Ovary (tissue), 10 donors: ENCODE measurements at regions of chr6 and their contacts with region 1.

Region 1: GRCh38 chr6:37819177-37819823 is at the start of gene ZFAND3:
- DNase-seq: peak; percentile 97 to 98 (median 98)
- H3K4me3 ChIP-seq: peak within 1 kb of the TSS; percentile 88
- H3K27ac ChIP-seq: peak within 1 kb of the TSS; percentile 98 to 99
- H3K4me1 ChIP-seq: peaks cover 12% of the 10 kb centered on the region
- H3K27me3 ChIP-seq: no peaks in the 10 kb centered on the region
- CTCF ChIP-seq: peak in 1 of 3 donors; percentile 37
- EP300 ChIP-seq: no peak
- POLR2A ChIP-seq: no peak
- total RNA-seq, gene ZFAND3: 16.6 to 81.1 (median 51.9) TPM

Region 2: DNA sequence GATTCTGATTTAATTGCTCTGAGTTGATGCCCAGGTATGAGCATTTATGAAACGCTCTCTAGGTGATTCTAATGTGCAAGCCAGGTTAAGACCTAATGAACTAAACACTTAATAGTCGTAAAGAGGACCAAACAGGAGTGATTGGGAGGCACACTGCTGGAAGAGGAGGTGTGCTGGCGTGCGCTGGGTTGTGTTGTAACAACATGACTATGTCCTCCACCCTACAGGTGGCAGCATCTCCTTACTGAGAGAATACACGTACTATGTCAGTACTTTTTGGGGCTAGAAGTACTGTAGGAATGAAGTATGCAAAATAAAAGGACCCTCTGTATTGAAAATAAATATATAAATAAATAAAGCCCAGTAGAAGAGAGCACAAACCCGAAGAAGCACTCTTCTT is 921.7 kb before region 1 on chr6:
- intact Hi-C with region 1: no loop called
- DNase-seq: no peak
- H3K4me3 ChIP-seq: no peak overlapping the region
- H3K27ac ChIP-seq: no peak overlapping the region
- H3K4me1 ChIP-seq: peaks cover 1% of the 10 kb centered on the region
- H3K27me3 ChIP-seq: no peaks in the 10 kb centered on the region
- CTCF ChIP-seq: peak in 1 of 3 donors; percentile 24
- EP300 ChIP-seq: no peak
- POLR2A ChIP-seq: no peak

Region 3: GRCh38 chr6:37860226-37860839 is 41.0 kb after region 1 on chr6:
- intact Hi-C with region 1: loop called in 1 of 4 experiments (anchors 10 kb)
- DNase-seq: peak in 1 of 5 donors; percentile 31
- H3K4me3 ChIP-seq: no peak overlapping the region
- H3K27ac ChIP-seq: no peak overlapping the region
- H3K4me1 ChIP-seq: peaks cover 3% of the 10 kb centered on the region
- H3K27me3 ChIP-seq: no peaks in the 10 kb centered on the region
- CTCF ChIP-seq: peak in 1 of 3 donors; percentile 39
- EP300 ChIP-seq: no peak
- POLR2A ChIP-seq: no peak

Region 4: GRCh38 chr6:37936906-37937305 is 117.6 kb after region 1 on chr6:
- intact Hi-C with region 1: no loop called
- DNase-seq: no peak
- H3K4me3 ChIP-seq: no peak overlapping the region
- H3K27ac ChIP-seq: no peak overlapping the region
- H3K4me1 ChIP-seq: no peaks in the 10 kb centered on the region
- H3K27me3 ChIP-seq: no peaks in the 10 kb centered on the region
- CTCF ChIP-seq: no peak
- EP300 ChIP-seq: no peak
- POLR2A ChIP-seq: no peak